ENCODE measurements at regions of chr3 and their contacts with region 1.

Region 1: DNA sequence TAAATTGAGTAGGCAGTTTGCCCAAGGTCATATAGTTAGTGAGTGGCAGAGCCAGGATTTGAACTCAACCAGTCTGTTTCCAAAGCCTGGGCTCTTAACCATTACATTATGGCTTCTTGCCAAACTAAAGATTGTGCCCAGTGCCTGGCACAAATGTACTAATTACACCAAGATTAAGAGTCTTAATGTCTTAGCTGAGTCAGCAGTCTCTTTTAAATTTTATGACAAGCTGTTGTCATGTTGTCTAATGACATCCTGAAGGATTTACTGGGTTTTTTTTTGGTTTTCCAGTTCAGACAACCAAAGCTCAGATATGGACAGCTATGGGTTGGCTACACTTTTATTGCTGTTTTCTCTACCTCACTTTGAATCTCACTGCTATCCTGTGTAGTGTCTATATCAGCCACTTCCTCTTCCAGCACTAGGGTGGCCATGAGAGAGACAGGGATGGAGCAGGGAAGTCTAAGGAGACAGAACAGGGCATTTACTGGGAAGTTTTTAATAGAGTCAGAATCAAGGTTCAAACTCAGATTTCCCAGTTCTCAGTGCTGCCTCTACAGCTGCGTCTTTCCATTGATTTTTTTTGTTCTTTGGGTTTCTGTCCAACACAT is 10.5 kb downstream of the FBXL2 start:
- DNase-seq: no peak
- ATAC-seq: no peak
- H3K4me3 ChIP-seq: no peak overlapping the region
- H3K4me3 Mint-ChIP-seq: no peak overlapping the region
- H3K27ac ChIP-seq: no peak overlapping the region
- H3K27ac Mint-ChIP-seq: no peak overlapping the region
- H3K4me1 ChIP-seq: no peaks in the 10 kb centered on the region
- H3K4me1 Mint-ChIP-seq: no peaks in the 10 kb centered on the region
- H3K27me3 ChIP-seq: peaks cover 0 to 12% of the 10 kb centered on the region in 2 experiments
- H3K27me3 Mint-ChIP-seq: peaks cover 47 to 49% of the 10 kb centered on the region in 2 donors

Region 2: GRCh38 chr3:33250712-33251111 is 37.1 kb before region 1 on chr3:
- CTCF ChIA-PET with region 1: no interaction called
- POLR2A ChIA-PET with region 1: no interaction called
- DNase-seq: no peak
- ATAC-seq: no peak
- H3K4me3 ChIP-seq: no peak overlapping the region
- H3K4me3 Mint-ChIP-seq: no peak overlapping the region
- H3K27ac ChIP-seq: no peak overlapping the region
- H3K27ac Mint-ChIP-seq: no peak overlapping the region
- H3K4me1 ChIP-seq: no peaks in the 10 kb centered on the region
- H3K4me1 Mint-ChIP-seq: no peaks in the 10 kb centered on the region
- H3K27me3 ChIP-seq: peaks cover 0 to 3% of the 10 kb centered on the region in 2 experiments
- H3K27me3 Mint-ChIP-seq: peaks cover 4 to 15% of the 10 kb centered on the region in 2 donors

Region 3: GRCh38 chr3:33273628-33274027 is 14.1 kb before region 1 on chr3:
- CTCF ChIA-PET with region 1: interaction called in 1 of 2 experiments, 3 read pairs
- POLR2A ChIA-PET with region 1: interaction called in 1 of 2 experiments, 13 read pairs
- DNase-seq: no peak
- ATAC-seq: no peak
- H3K4me3 ChIP-seq: no peak overlapping the region
- H3K4me3 Mint-ChIP-seq: no peak overlapping the region
- H3K27ac ChIP-seq: no peak overlapping the region
- H3K27ac Mint-ChIP-seq: no peak overlapping the region
- H3K4me1 ChIP-seq: peaks cover 0 to 5% of the 10 kb centered on the region in 2 experiments
- H3K4me1 Mint-ChIP-seq: peaks cover 7 to 9% (median 7%) of the 10 kb centered on the region in 3 donors
- H3K27me3 ChIP-seq: peaks cover 0 to 27% of the 10 kb centered on the region in 2 experiments
- H3K27me3 Mint-ChIP-seq: peaks cover 42 to 47% of the 10 kb centered on the region in 2 donors